Left ventricle myocardium superior (tissue), 1 donor: ENCODE measurements at regions of chr18 and their contacts with region 1.

Region 1: GRCh38 chr18:51110073-51110803 is 80.2 kb downstream of the SMAD4 start:
- DNase-seq: peak; percentile 81
- ATAC-seq: peak; percentile 95

Region 2: DNA sequence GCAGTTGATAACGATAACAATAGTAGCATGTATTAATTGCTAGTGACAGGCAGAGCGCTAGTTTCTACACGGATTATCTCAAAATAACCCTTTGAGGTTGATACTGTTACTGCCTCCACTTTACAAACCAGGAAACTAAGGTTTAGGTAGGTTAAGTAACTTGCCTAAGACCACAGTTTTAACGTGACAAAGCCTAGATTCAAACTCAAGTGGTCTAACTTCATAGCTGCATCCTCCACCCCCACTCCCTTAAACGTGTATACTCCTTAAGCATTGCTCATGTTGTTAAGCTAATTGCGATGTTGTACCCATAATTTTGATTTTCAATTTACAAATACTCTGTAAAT is 230.1 kb before region 1 on chr18:
- intact Hi-C with region 1: no loop called
- DNase-seq: no peak
- ATAC-seq: no peak

Region 3: DNA sequence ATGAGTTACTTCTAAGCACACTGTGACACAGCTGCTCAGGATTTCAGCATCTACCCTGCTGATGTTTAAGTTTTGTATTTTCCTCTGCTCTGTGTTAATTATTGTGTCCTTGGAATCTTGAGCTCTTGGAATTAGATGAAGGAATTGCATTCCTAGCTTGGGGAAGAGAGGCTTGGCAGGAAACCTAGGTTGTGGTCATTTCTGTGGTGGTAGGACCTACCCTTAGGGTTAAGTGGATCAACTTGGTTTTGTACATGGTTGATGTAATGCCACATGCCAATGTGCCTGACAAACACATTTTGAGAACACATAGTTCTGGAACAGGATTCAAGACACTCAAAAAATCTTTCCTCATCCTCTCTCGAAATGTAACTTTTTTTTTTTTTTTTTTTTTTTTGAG is 351.7 kb after region 1 on chr18:
- intact Hi-C with region 1: no loop called
- DNase-seq: no peak
- ATAC-seq: no peak

Region 4: GRCh38 chr18:51537487-51537886 is 427.2 kb after region 1 on chr18:
- intact Hi-C with region 1: loop called (anchors 5 kb)
- DNase-seq: peak; percentile 57
- ATAC-seq: peak; percentile 89